ENCODE measurements at regions of chr7 and their contacts with region 1.

Region 1: GRCh38 chr7:95596198-95597063 is at the start of gene PDK4:
- DNase-seq: peak; percentile 97 to 98
- ATAC-seq: peak; percentile 71 to 83 (median 80)
- H3K4me3 ChIP-seq: peak within 1 kb of the TSS; percentile 93
- H3K27ac ChIP-seq: peak within 1 kb of the TSS; percentile 98
- H3K4me1 ChIP-seq: peaks cover 43% of the 10 kb centered on the region
- H3K27me3 ChIP-seq: no peaks in the 10 kb centered on the region
- CTCF ChIP-seq: peak; percentile 2
- total RNA-seq, gene PDK4: 386 to 3,046 (median 1,769) TPM

Region 2: DNA sequence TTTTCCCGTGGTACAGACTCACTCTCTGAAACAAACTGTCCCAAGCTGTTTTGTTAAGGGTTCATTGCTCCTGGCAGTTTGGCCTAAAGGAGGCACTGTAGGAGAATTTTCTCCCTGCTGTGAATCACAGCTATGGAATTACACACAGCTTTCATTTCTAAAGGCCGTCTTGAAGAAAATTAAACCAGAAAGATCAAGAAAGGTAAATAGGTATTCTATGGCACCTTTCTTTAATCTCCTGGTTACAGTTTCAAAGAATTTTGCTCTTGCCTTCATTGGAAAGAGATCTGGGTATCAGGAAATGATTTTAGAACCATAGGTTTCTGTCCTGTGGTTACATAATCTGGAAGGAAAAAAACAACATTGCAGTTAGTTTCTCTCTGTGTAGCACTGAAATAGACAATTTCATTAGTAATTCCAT is 51.3 kb before region 1 on chr7:
- intact Hi-C with region 1: loop called (anchors 1 to 5 kb)
- DNase-seq: no peak
- ATAC-seq: peak; percentile 65 to 77 (median 66)
- H3K4me3 ChIP-seq: peak overlapping the region; percentile 59
- H3K27ac ChIP-seq: peak overlapping the region; percentile 97
- H3K4me1 ChIP-seq: peaks cover 53% of the 10 kb centered on the region
- H3K27me3 ChIP-seq: no peaks in the 10 kb centered on the region
- CTCF ChIP-seq: peak; percentile 71